H1 (cell line): ENCODE measurements at regions of chr1 and their contacts with region 1.

Region 1: GRCh38 chr1:155250633-155251449 is 4.4 kb downstream of the ENTREP3 start:
- DNase-seq: peak in 1 of 2 experiments; percentile 100
- H3K4me3 ChIP-seq: peak overlapping the region; percentile 11 to 64 (median 58)
- H3K27ac ChIP-seq: no peak overlapping the region; the same call in 1 of the 2 replicates
- H3K4me1 ChIP-seq: peaks cover 0 to 20% (median 13%) of the 10 kb centered on the region in 4 experiments; a peak in 6 of 7 replicates
- H3K27me3 ChIP-seq: peaks cover 0 to 8% (median 4%) of the 10 kb centered on the region in 4 experiments; a peak in 2 of 7 replicates
- CTCF ChIP-seq: peak; percentile 100
- EP300 ChIP-seq: no peak
- POLR2A ChIP-seq: no peak
- RAD21 ChIP-seq: peak; percentile 88 to 90

Region 2: DNA sequence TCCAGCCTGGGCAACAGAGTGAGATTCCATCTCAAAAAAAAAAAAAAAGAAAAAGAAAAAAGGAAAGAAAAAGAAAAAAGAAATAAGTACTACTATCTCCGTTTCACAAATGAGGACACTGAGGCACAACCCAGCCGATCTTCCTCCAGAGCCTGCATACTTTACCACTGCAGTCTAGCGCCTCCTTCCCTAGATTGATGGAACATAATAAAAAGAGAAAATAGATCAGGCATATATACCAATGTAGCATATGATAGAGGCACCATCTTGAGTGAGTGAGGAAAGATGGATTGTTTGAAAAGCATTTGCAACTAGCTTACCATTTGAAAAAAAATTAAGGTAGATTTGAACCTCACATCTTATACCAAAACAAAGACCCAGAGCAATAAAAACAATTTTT is 105.3 kb before region 1 on chr1:
- CTCF ChIA-PET with region 1: no interaction called
- POLR2A ChIA-PET with region 1: no interaction called
- DNase-seq: no peak
- H3K4me3 ChIP-seq: no peak overlapping the region
- H3K27ac ChIP-seq: no peak overlapping the region
- H3K4me1 ChIP-seq: no peaks in the 10 kb centered on the region
- H3K27me3 ChIP-seq: peaks cover 0 to 3% (median 0%) of the 10 kb centered on the region in 4 experiments; a peak in 2 of 7 replicates
- CTCF ChIP-seq: peak in 2 of 3 experiments; percentile 24 to 30; a peak in 2 of 4 replicates
- EP300 ChIP-seq: no peak
- POLR2A ChIP-seq: no peak
- RAD21 ChIP-seq: peak in 1 of 2 experiments; percentile 22; a peak in 2 of 4 replicates

Region 3: GRCh38 chr1:155218854-155219591 is 31.8 kb before region 1 on chr1:
- CTCF ChIA-PET with region 1: interaction called, 20 read pairs
- POLR2A ChIA-PET with region 1: interaction called, 8 read pairs
- DNase-seq: peak in 1 of 2 experiments; percentile 69
- H3K4me3 ChIP-seq: peak overlapping the region in 2 of 4 experiments; percentile 20 to 21; a peak in 2 of 8 replicates
- H3K27ac ChIP-seq: no peak overlapping the region
- H3K4me1 ChIP-seq: peaks cover 0 to 7% (median 0%) of the 10 kb centered on the region in 4 experiments; a peak in 1 of 7 replicates
- H3K27me3 ChIP-seq: no peaks in the 10 kb centered on the region
- CTCF ChIP-seq: no peak
- EP300 ChIP-seq: peak in 1 of 2 experiments; percentile 61; a peak in 1 of 3 replicates
- POLR2A ChIP-seq: no peak
- RAD21 ChIP-seq: no peak

Region 4: GRCh38 chr1:155267373-155267772 is 16.5 kb after region 1 on chr1:
- CTCF ChIA-PET with region 1: interaction called, 63 read pairs
- POLR2A ChIA-PET with region 1: interaction called, 48 read pairs
- DNase-seq: no peak
- H3K4me3 ChIP-seq: no peak overlapping the region
- H3K27ac ChIP-seq: no peak overlapping the region
- H3K4me1 ChIP-seq: peaks cover 0 to 5% (median under 1%) of the 10 kb centered on the region in 4 experiments; a peak in 2 of 7 replicates
- H3K27me3 ChIP-seq: no peaks in the 10 kb centered on the region
- CTCF ChIP-seq: no peak
- EP300 ChIP-seq: no peak
- POLR2A ChIP-seq: no peak
- RAD21 ChIP-seq: no peak

Region 5: GRCh38 chr1:155295183-155295941 is 44.5 kb after region 1 on chr1:
- CTCF ChIA-PET with region 1: interaction called, 23 read pairs
- POLR2A ChIA-PET with region 1: interaction called, 8 read pairs
- DNase-seq: peak in 1 of 2 experiments; percentile 87
- H3K4me3 ChIP-seq: peak overlapping the region; percentile 52 to 89 (median 84)
- H3K27ac ChIP-seq: no peak overlapping the region
- H3K4me1 ChIP-seq: peaks cover 3 to 23% (median 10%) of the 10 kb centered on the region in 4 experiments; a peak in 6 of 7 replicates
- H3K27me3 ChIP-seq: peaks cover 0 to 23% (median 14%) of the 10 kb centered on the region in 4 experiments; a peak in 5 of 7 replicates
- CTCF ChIP-seq: no peak
- EP300 ChIP-seq: no peak
- POLR2A ChIP-seq: no peak
- RAD21 ChIP-seq: no peak

Region 6: GRCh38 chr1:155323798-155324610 is 73.2 kb after region 1 on chr1:
- CTCF ChIA-PET with region 1: interaction called, 227 read pairs
- POLR2A ChIA-PET with region 1: interaction called, 11 read pairs
- DNase-seq: peak; percentile 77 to 93
- H3K4me3 ChIP-seq: peak overlapping the region; percentile 82 to 95 (median 90)
- H3K27ac ChIP-seq: peak overlapping the region; percentile 67; the same call in 1 of the 2 replicates
- H3K4me1 ChIP-seq: peaks cover 8 to 26% (median 14%) of the 10 kb centered on the region in 4 experiments; a peak in 6 of 7 replicates
- H3K27me3 ChIP-seq: peaks cover 0 to 5% (median 3%) of the 10 kb centered on the region in 4 experiments; a peak in 4 of 7 replicates
- CTCF ChIP-seq: no peak
- EP300 ChIP-seq: no peak
- POLR2A ChIP-seq: peak in 1 of 2 experiments; percentile 26; a peak in 2 of 3 replicates
- RAD21 ChIP-seq: no peak